ENCODE measurements at regions of chr2 and their contacts with region 1.

Region 1: DNA sequence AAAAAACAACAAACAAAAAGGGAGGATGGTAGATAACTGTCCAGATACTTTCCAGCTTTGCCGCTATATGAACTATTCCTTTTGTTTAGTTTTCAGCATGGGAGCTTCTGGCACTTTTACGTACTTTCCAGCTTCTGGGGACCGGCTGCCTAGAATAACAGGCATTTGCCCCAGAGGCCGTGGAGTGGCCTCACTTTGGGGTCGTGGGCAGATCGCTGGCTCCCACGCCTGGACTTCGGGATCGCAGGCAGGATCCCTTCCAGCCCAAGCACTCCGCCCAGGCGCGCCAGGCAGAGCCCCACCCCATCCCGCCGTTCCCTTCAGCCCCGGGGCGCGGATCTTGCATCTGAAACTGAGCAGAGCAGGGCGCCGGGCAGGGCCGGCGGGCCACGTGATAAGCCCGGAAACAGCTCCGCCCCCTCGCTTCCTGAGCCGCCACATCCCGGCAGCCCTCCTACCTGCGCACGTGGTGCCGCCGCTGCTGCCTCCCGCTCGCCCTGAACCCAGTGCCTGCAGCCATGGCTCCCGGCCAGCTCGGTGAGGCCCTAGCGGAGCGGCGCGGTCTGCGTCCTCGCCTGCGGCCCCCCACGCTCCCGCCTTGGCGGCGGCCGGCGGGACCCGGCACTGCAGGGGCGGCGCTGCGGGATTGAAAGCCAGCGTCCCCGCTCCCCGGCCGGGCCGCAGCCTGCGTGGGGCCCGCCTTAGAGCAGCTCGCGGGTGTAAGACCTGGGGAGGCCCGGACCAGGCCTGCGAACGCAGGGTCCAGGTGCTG is at the start of gene ATIC:
- DNase-seq: peak; percentile 67 to 92 (median 83)
- ATAC-seq: peak; percentile 98
- H3K4me3 ChIP-seq: peak within 1 kb of the TSS; percentile 98
- H3K4me3 Mint-ChIP-seq: peak within 1 kb of the TSS; percentile 86 to 95 (median 93)
- H3K27ac ChIP-seq: peak within 1 kb of the TSS; percentile 74
- H3K27ac Mint-ChIP-seq: peak within 1 kb of the TSS; percentile 84 to 97 (median 92)
- H3K4me1 ChIP-seq: peaks cover 13 to 16% of the 10 kb centered on the region in 2 donors
- H3K4me1 Mint-ChIP-seq: peaks cover 11 to 42% (median 37%) of the 10 kb centered on the region in 7 donors
- H3K27me3 ChIP-seq: no peaks in the 10 kb centered on the region
- H3K27me3 Mint-ChIP-seq: peaks cover 0 to 2% (median 0%) of the 10 kb centered on the region in 5 donors
- total RNA-seq, gene ATIC: 62.1 to 170 (median 83.2) TPM

Region 2: DNA sequence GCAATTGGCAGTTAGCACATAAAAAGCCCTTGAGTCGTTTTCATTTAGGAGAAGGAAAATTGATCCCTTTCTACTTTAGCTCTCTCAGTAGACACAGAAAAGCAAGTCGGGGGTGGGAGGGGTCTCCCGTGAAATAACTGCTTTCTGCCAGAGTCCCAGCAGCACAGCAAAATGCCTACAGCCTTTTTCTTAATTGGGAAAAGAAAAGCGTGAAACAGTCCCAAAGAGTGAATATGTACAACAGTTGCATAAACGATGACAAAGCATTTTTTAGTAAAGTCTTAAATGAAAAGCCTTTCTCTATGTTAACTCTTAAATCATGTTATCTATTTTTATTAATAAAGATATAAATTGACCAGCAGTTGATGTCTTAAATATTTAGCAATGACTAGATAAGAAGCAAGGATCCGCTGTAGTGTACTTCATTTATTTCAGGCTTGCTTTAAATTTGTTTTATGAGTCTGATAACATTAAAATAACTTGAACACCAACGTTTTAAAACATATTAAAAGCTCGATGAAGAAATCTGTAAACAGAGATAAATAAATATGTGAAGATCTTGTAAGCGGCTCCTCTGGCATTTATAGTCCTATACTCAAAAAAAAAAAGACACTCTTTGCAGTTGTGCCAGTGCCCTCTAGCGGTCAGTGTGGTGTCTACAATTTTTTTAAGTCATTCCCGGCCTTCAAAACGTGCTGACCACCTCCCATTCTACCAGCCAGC is 42.3 kb before region 1 on chr2:
- CTCF ChIA-PET with region 1: no interaction called
- POLR2A ChIA-PET with region 1: interaction called, 3 read pairs
- intact Hi-C with region 1: loop called in 1 of 2 experiments (anchors 1 kb)
- DNase-seq: peak in 8 of 9 donors; percentile 21 to 59 (median 38)
- ATAC-seq: peak; percentile 81
- H3K4me3 ChIP-seq: no peak overlapping the region
- H3K4me3 Mint-ChIP-seq: no peak overlapping the region
- H3K27ac ChIP-seq: no peak overlapping the region
- H3K27ac Mint-ChIP-seq: no peak overlapping the region
- H3K4me1 ChIP-seq: no peaks in the 10 kb centered on the region
- H3K4me1 Mint-ChIP-seq: peaks cover 0 to 4% (median 0%) of the 10 kb centered on the region in 7 donors
- H3K27me3 ChIP-seq: no peaks in the 10 kb centered on the region
- H3K27me3 Mint-ChIP-seq: peaks cover 0 to 6% (median 3%) of the 10 kb centered on the region in 5 donors

Region 3: DNA sequence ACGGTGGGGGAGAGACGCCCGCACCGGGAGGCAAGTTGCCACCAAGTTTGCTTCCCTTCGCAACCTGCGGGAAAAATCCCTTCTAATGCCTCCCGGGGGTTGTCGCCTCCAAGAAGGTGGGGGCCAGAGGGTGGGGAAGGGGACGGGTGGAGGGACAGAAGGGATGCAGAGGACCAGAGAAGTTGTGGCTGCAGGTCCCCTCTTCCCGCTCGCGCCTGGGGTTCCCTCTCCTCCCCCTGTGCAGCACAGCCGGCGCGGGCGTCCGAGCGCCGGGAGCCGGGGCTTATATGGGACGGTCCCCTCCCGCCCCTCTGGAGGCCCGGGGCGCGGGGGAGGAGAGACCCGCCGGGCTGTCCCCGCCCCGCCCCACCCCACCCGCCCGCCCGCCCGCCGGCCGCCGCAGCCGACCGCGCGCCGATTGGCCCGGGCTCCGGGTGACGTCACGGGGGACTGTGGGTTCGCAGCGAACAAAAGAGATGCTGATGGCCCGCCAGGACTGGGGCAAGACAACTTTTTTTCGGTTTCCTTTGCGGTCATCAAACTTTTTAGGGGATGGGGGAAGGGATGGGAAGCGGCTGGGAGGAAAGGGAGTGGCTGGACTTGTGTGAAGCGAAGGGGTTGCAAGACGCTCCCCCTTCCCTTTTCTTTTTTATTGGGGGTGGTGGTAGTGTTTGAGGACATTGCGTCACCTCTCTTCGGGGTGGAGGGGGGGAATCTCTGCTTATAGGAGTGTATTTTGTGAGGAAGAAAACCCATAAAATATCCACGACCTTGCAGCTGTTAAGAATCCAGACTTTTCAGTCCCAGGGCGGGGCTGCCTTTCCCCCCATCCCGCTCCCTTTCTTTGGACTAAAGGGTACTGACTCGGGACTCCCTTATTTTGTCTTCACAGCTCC is 124.2 kb after region 1 on chr2 and contains the start of gene FN1:
- CTCF ChIA-PET with region 1: no interaction called
- POLR2A ChIA-PET with region 1: no interaction called
- intact Hi-C with region 1: loop called in 1 of 2 experiments (anchors 2 kb)
- DNase-seq: peak; percentile 26 to 76 (median 38)
- ATAC-seq: peak; percentile 72
- H3K4me3 ChIP-seq: peak within 1 kb of the TSS; percentile 47
- H3K4me3 Mint-ChIP-seq: peak within 1 kb of the TSS; percentile 77 to 89 (median 82)
- H3K27ac ChIP-seq: no peak within 1 kb of the TSS
- H3K27ac Mint-ChIP-seq: peak within 1 kb of the TSS in 2 of 9 donors; percentile 41 to 71
- H3K4me1 ChIP-seq: peaks cover 8 to 15% of the 10 kb centered on the region in 2 donors
- H3K4me1 Mint-ChIP-seq: peaks cover 10 to 22% (median 21%) of the 10 kb centered on the region in 7 donors
- H3K27me3 ChIP-seq: peaks cover 12 to 24% of the 10 kb centered on the region in 2 donors
- H3K27me3 Mint-ChIP-seq: peaks cover 58 to 80% (median 73%) of the 10 kb centered on the region in 5 donors
- total RNA-seq, gene FN1: 0.13 to 2.2 (median 0.81) TPM

Region 4: DNA sequence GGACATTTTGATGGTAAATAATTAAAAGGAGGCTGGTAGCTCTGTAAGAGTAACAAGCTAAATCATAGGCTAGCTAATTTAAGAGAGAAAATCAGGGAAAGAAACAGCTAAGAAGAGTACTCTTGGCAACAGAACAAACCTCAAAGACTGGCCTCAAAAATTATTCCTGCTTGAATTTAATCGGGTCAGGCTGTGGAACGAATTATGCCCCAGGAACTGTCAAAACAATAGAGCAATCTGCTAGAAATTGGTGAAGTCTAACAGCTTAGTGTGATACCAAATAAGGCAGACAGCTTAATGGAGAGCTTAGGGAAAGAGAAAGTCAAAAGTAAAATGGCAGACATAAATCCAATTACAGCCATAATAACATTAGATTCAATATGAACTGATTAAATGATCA is 485.9 kb after region 1 on chr2:
- CTCF ChIA-PET with region 1: no interaction called
- POLR2A ChIA-PET with region 1: no interaction called
- intact Hi-C with region 1: no loop called
- DNase-seq: no peak
- ATAC-seq: no peak
- H3K4me3 ChIP-seq: no peak overlapping the region
- H3K4me3 Mint-ChIP-seq: no peak overlapping the region
- H3K27ac ChIP-seq: no peak overlapping the region
- H3K27ac Mint-ChIP-seq: no peak overlapping the region
- H3K4me1 ChIP-seq: no peaks in the 10 kb centered on the region
- H3K4me1 Mint-ChIP-seq: peaks cover 0 to 16% (median 5%) of the 10 kb centered on the region in 7 donors
- H3K27me3 ChIP-seq: no peaks in the 10 kb centered on the region
- H3K27me3 Mint-ChIP-seq: peaks cover 0 to 8% (median 5%) of the 10 kb centered on the region in 5 donors

Region 5: DNA sequence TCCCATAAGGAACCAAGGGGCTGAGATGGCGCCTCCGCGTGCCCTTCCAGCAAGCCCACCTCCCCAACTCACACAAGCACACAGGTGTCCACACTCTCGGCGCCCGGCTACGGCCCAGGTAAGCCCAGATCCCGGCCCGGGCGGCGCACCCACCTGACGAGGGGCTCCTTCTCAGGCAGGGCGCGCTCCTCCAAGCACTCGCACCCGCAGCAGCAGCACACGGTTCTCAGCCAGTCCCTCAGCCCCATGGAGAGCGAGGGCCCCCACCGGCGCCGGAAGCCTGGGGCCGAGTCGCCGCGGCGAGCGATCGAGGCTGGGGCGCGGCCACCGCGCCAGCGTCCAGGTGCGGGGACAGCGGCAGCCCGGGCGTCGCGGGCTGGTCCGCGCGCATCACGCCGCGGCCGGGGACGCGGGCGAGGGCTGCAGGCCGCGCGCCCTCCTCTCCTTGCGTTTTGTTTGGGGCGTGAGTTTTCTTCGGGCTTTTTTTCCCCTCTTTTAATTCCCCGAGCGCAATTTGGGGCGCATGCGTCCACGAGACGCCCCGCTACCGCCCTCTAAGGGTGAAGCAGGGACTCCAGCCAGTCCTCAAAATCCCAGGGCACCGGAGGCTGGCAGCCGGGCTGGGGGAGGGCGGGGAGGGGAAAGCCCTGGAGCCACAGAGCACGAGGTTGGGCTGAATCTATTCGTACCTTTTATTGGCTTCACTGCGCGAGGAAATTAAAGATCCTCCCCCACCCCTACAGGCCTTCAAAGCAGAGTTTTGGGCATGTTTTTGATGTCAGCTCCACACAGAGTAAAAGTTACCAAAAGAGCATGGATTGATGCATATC is 701.5 kb after region 1 on chr2 and contains the start of gene MREG:
- CTCF ChIA-PET with region 1: no interaction called
- POLR2A ChIA-PET with region 1: interaction called, 3 read pairs
- intact Hi-C with region 1: loop called (anchors 5 kb)
- DNase-seq: peak; percentile 67 to 84 (median 80)
- ATAC-seq: peak; percentile 90
- H3K4me3 ChIP-seq: peak within 1 kb of the TSS; percentile 65
- H3K4me3 Mint-ChIP-seq: peak within 1 kb of the TSS; percentile 82 to 93 (median 89)
- H3K27ac ChIP-seq: peak within 1 kb of the TSS; percentile 59
- H3K27ac Mint-ChIP-seq: peak within 1 kb of the TSS; percentile 33 to 91 (median 74)
- H3K4me1 ChIP-seq: peaks cover 30 to 31% of the 10 kb centered on the region in 2 donors
- H3K4me1 Mint-ChIP-seq: peaks cover 27 to 70% (median 53%) of the 10 kb centered on the region in 7 donors
- H3K27me3 ChIP-seq: no peaks in the 10 kb centered on the region
- H3K27me3 Mint-ChIP-seq: peaks cover 0 to 4% (median 0%) of the 10 kb centered on the region in 5 donors
- total RNA-seq, gene MREG: 4.8 to 8.5 (median 6.4) TPM

Region 6: DNA sequence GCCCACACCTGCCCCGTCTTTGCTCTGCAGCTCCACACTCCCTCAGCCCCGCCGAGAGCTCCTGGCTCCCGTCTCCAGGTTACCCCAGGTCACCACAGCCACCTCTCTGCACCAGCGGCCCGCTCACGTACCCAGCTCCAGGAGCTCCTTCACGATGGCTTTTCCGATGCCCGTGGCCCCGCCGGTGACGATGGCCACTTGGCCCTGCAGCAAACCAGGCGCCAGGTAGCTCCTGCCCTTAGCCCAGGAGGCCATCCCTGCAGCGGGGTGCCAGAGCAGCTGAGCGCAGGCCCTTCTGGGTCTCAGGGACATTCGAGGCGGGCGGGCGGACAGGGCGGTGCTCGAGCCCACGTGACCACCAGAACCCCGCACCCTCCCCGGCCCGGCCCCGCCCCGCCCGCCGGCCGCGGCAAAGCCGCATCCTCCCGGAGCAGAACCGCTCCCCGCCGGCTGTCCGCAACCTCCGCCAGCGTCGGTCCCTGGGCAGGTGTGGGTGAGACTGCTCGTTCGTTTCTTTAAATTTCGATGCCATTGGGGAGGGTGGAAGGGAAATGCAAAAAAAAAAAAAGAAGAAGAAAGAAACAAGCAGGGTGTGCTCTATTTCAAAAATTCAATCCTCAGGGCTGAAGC is 769.8 kb after region 1 on chr2 and contains the starts of genes PECR and TMEM169:
- CTCF ChIA-PET with region 1: no interaction called
- POLR2A ChIA-PET with region 1: no interaction called
- intact Hi-C with region 1: loop called in 1 of 2 experiments (anchors 5 kb)
- DNase-seq: peak; percentile 39 to 81 (median 62)
- ATAC-seq: peak; percentile 93
- H3K4me3 ChIP-seq: peak within 1 kb of the TSS; percentile 95
- H3K4me3 Mint-ChIP-seq: peak within 1 kb of the TSS; percentile 76 to 97 (median 94)
- H3K27ac ChIP-seq: peak within 1 kb of the TSS; percentile 77
- H3K27ac Mint-ChIP-seq: peak within 1 kb of the TSS; percentile 86 to 97 (median 95)
- H3K4me1 ChIP-seq: peaks cover 42 to 57% of the 10 kb centered on the region in 2 donors
- H3K4me1 Mint-ChIP-seq: peaks cover 47 to 76% (median 62%) of the 10 kb centered on the region in 7 donors
- H3K27me3 ChIP-seq: no peaks in the 10 kb centered on the region
- H3K27me3 Mint-ChIP-seq: no peaks in the 10 kb centered on the region
- total RNA-seq, gene PECR: 15.7 to 29.9 (median 20.6) TPM
- total RNA-seq, gene TMEM169: 2.0 to 5.1 (median 2.6) TPM

Region 7: GRCh38 chr2:216114714-216115557 is 803.1 kb after region 1 on chr2:
- CTCF ChIA-PET with region 1: no interaction called
- POLR2A ChIA-PET with region 1: no interaction called
- intact Hi-C with region 1: loop called in 1 of 2 experiments (anchors 5 kb)
- DNase-seq: peak; percentile 91 to 98 (median 96)
- ATAC-seq: peak; percentile 94
- H3K4me3 ChIP-seq: peak overlapping the region; percentile 65
- H3K4me3 Mint-ChIP-seq: peak overlapping the region; percentile 88 to 99 (median 94)
- H3K27ac ChIP-seq: peak overlapping the region; percentile 77
- H3K27ac Mint-ChIP-seq: peak overlapping the region; percentile 89 to 99 (median 97)
- H3K4me1 ChIP-seq: peaks cover 35 to 58% of the 10 kb centered on the region in 2 donors
- H3K4me1 Mint-ChIP-seq: peaks cover 51 to 100% (median 96%) of the 10 kb centered on the region in 7 donors
- H3K27me3 ChIP-seq: no peaks in the 10 kb centered on the region
- H3K27me3 Mint-ChIP-seq: peaks cover 0 to 2% (median 0%) of the 10 kb centered on the region in 5 donors